Left colon (tissue), 2 donors: ENCODE measurements at regions of chr10 and their contacts with region 1.

Region 1: GRCh38 chr10:61140765-61141392 is 196.9 kb upstream of the RHOBTB1 start:
- DNase-seq: no peak
- ATAC-seq: peak; percentile 58

Region 2: DNA sequence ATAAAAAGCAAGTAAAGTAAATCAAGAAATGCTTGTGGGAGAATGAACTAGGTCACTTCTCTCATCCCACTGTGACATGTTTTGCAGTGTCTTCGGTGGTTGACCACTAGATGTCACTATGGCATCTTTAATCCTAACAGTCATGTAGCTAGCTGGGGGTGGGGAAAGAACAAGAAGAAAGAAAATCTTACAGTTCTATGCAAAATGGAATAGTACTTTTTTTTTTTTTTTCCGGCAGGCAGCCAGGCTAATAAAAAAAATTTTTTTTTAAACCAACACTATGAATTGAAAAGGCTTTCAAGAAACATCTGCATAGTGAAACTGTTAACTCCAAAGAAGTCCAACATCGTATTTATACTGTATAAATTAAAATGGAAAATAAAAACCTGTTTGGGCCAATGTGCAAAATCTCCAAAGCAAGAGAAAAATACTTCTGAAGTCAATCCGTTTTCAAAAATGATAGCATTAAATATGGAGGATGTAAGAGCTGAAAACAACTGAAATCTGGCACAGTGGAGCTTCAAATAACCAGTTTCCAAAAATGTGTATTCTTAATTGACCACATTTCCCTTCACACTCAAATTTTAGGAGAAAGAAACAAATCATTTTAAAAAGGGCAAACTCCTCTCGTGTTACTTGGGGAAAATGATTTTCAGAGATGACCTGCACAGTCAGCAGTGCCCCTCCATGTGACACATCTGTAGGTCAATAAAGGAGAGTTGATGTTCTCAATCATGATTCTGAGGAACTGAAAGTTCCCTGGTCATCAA is 324.1 kb before region 1 on chr10:
- intact Hi-C with region 1: loop called in 1 of 2 experiments (anchors 10 kb)
- DNase-seq: peak in 1 of 2 donors; percentile 12
- ATAC-seq: peak; percentile 82